ENCODE measurements at regions of chr2 and their contacts with region 1.

Region 1: DNA sequence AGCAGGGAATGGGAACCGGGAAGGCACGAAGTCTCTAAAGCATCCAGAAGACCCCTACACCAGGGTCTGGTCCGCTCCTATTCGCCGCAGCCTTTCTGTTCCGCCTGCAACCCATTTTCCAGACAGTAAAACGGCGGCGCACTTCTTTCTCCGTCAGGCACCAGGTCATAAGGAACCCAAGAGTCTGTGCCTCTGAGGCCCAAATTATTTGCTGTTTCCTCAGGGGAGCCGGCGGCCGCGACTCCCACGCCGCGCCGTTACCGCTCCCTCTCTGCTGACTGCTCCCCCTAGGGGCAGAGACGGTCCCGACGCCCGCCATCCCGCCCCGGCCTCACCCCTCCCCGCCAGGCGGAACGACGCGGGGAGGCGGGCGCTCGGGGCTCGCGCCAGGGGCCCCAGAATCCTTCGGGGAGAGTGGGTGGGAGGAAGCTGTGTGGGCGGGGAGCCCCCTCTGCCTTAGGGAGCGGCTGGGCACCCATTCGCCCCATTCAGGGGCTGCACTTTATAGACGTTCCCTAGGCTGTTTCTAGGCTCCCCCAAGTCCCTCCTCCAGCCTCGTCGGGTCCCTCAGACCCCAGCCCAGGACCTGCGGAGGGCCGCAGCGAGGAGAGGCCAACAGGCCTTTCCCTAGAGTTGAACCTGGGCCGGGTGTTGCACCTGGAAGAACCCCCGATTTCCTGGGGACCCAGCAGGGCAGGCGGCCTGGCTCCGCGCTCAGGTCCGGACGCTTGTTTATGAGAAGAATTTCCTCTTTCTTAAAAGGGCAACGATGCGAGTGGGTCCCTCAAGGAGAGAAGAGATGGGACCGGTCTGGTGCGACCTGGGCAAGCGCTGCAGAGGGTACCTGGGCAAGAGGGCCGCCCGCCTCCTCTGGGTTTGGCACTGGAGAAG is 3.6 kb upstream of the CTDSP1 start:
- DNase-seq: peak; percentile 83 to 95
- H3K4me3 ChIP-seq: peak overlapping the region; percentile 89
- H3K27ac ChIP-seq: peak overlapping the region; percentile 79
- H3K4me1 ChIP-seq: peaks cover 20% of the 10 kb centered on the region
- H3K27me3 ChIP-seq: no peaks in the 10 kb centered on the region
- CTCF ChIP-seq: peak; percentile 86

Region 2: DNA sequence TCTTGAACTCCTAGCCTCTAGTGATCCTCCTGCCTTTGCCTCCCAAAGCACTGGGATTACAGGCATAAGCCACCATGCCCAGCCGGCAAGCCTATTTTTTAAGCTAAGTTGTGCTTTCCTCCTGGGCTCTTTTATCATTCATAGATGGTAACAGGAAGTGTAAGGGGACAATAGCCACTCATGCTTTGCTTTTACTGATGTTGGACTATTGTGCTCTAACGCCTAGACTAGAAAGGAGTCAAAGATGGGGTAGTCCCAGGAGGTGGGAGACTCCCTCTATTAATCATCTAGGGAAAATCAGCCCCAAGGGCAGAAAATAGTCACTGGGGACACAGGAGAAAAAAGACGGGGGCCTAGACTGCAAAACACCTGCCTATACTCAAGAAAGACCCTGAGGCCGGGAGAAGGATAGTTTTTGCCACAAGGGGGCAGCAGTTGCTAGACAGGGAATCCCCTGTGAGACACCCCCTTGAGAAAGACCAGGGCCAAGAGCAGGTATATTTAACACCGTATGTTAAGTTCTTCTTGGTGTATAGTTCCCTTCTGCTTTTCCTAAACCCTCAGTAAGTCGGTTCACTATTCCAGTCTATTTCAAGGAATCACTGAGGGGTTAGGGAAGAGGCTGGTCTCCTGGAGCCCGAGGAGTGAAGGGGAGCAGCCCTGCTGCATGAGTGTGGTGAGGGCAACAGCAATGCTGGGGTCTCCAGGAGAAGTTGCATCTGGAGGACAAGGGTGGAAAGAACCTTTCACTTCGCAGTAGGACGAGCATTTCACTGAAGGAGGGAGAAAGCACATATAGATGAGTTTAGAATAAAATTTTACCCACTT is 227.2 kb before region 1 on chr2:
- CTCF ChIA-PET with region 1: no interaction called
- POLR2A ChIA-PET with region 1: no interaction called
- intact Hi-C with region 1: loop called (anchors 5 kb)
- DNase-seq: peak in 1 of 2 experiments; percentile 52
- H3K4me3 ChIP-seq: no peak overlapping the region
- H3K27ac ChIP-seq: no peak overlapping the region
- H3K4me1 ChIP-seq: peaks cover 7% of the 10 kb centered on the region; the same call in 1 of the 2 replicates
- H3K27me3 ChIP-seq: peaks cover 7% of the 10 kb centered on the region; the same call in 1 of the 2 replicates
- CTCF ChIP-seq: peak; percentile 70

Region 3: GRCh38 chr2:218186355-218186766 is 209.7 kb before region 1 on chr2:
- CTCF ChIA-PET with region 1: interaction called, 10 read pairs
- POLR2A ChIA-PET with region 1: no interaction called
- intact Hi-C with region 1: loop called (anchors 1 kb)
- DNase-seq: peak; percentile 56 to 72
- H3K4me3 ChIP-seq: no peak overlapping the region
- H3K27ac ChIP-seq: no peak overlapping the region
- H3K4me1 ChIP-seq: no peaks in the 10 kb centered on the region; the same call in 1 of the 2 replicates
- H3K27me3 ChIP-seq: 0 out of 2 replicates have a peak, but pooled peaks cover 6% of the 10 kb centered on the region
- CTCF ChIP-seq: peak; percentile 87

Region 4: GRCh38 chr2:218292048-218293014 is 103.7 kb before region 1 on chr2 and contains the start of gene TMBIM1:
- CTCF ChIA-PET with region 1: interaction called, 4 read pairs
- POLR2A ChIA-PET with region 1: interaction called, 9 read pairs
- intact Hi-C with region 1: loop called (anchors 2 kb)
- DNase-seq: peak; percentile 38 to 85
- H3K4me3 ChIP-seq: peak within 1 kb of the TSS; percentile 89
- H3K27ac ChIP-seq: peak within 1 kb of the TSS; percentile 96
- H3K4me1 ChIP-seq: peaks cover 87% of the 10 kb centered on the region
- H3K27me3 ChIP-seq: no peaks in the 10 kb centered on the region
- CTCF ChIP-seq: peak; percentile 66
- total RNA-seq, gene TMBIM1: 172 and 187 TPM in 2 replicates

Region 5: DNA sequence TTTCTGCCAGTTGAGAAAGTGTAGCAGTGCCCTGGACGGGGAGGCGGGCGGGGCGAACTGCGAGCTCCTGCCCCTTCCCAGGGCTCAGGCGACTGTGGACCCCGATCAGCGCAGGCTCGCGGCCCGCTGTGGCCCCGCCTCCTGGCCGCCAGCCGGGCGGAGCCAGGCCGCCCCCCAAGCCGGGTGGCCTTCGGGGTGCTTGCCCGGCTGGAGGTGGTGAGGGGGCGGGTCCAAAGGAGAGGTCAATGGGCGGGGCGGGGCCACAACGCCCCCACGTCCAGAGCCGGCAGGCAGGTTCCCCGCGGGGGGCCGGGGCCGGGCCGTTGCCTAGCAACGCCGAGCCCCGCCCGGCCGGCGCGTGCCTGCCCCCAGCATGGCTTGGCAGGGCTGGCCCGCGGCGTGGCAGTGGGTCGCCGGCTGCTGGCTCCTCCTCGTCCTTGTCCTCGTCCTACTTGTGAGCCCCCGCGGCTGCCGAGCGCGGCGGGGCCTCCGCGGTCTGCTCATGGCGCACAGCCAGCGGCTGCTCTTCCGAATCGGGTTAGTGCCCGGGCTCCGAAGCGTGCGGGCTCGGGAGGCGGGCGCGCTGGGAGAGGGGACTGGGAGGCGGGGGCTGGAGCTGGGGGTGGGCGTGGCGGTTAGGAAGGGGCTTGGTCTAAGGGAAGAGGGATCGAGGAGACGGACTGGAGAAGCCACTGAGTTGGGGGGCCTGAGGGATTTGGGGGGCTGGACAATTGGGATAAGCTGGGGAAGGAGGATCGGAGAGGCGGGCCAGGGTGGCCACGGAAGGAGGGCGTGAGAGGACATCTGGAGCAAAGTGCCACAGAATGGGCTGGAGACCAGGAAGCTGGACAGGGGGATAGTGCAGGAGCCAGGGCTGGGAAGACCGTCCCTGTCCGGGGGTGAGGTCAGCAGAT is 72.9 kb before region 1 on chr2:
- CTCF ChIA-PET with region 1: no interaction called
- POLR2A ChIA-PET with region 1: interaction called, 8 read pairs
- intact Hi-C with region 1: loop called (anchors 2 kb)
- DNase-seq: peak; percentile 66 to 94
- H3K4me3 ChIP-seq: peak overlapping the region; percentile 66
- H3K27ac ChIP-seq: peak overlapping the region; percentile 88
- H3K4me1 ChIP-seq: peaks cover 46% of the 10 kb centered on the region
- H3K27me3 ChIP-seq: no peaks in the 10 kb centered on the region
- CTCF ChIP-seq: no peak

Region 6: GRCh38 chr2:218360447-218360846 is 35.6 kb before region 1 on chr2:
- CTCF ChIA-PET with region 1: interaction called, 3 read pairs
- POLR2A ChIA-PET with region 1: interaction called, 5 read pairs
- intact Hi-C with region 1: loop called (anchors 5 kb)
- DNase-seq: no peak
- H3K4me3 ChIP-seq: no peak overlapping the region
- H3K27ac ChIP-seq: peak overlapping the region; percentile 82
- H3K4me1 ChIP-seq: peaks cover 36% of the 10 kb centered on the region
- H3K27me3 ChIP-seq: no peaks in the 10 kb centered on the region
- CTCF ChIP-seq: no peak